ENCODE measurements at regions of chr19 and their contacts with region 1.

Region 1: GRCh38 chr19:45692187-45693105 is at the start of gene QPCTL:
- DNase-seq: peak; percentile 89 to 99 (median 98)
- ATAC-seq: peak; percentile 88 to 90
- H3K4me3 Mint-ChIP-seq: peak within 1 kb of the TSS; percentile 91 to 100 (median 96)
- H3K27ac Mint-ChIP-seq: peak within 1 kb of the TSS; percentile 89 to 99 (median 96)
- H3K4me1 Mint-ChIP-seq: peaks cover 9 to 34% (median 23%) of the 10 kb centered on the region in 4 donors
- H3K27me3 Mint-ChIP-seq: no peaks in the 10 kb centered on the region
- polyA plus RNA-seq, gene QPCTL: 0.65 to 2.3 (median 1.6) TPM

Region 2: DNA sequence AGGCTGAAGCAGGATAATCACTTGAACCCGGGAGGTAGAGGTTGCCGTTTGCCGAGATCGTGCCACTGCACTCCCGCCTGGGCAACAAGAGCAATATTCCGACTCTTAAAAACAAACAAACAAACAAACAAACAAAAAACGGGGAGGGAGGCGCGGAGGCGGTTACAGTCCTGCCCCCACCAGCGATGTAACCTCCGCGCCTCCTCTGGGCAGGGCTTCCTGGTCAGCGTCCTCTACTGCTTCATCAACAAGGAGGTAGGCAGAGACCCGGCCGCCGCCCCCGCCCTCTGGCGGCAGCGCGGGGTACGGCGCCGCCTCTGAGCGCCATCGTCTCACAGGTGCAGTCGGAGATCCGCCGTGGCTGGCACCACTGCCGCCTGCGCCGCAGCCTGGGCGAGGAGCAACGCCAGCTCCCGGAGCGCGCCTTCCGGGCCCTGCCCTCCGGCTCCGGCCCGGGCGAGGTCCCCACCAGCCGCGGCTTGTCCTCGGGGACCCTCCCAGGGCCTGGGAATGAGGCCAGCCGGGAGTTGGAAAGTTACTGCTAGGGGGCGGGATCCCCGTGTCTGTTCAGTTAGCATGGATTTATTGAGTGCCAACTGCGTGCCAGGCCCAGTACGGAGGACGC is 10.9 kb before region 1 on chr19:
- POLR2A ChIA-PET with region 1: interaction called, 19 read pairs
- DNase-seq: peak; percentile 73 to 89 (median 86)
- ATAC-seq: peak; percentile 75 to 82
- H3K4me3 Mint-ChIP-seq: peak overlapping the region; percentile 70 to 88 (median 78)
- H3K27ac Mint-ChIP-seq: peak overlapping the region in 8 of 10 donors; percentile 48 to 87 (median 78)
- H3K4me1 Mint-ChIP-seq: peaks cover 15 to 26% (median 24%) of the 10 kb centered on the region in 4 donors
- H3K27me3 Mint-ChIP-seq: peaks cover 0 to 5% (median 0%) of the 10 kb centered on the region in 5 donors

Region 3: GRCh38 chr19:45717166-45717982 is 24.9 kb after region 1 on chr19:
- POLR2A ChIA-PET with region 1: interaction called, 47 read pairs
- DNase-seq: peak; percentile 93 to 99 (median 98)
- ATAC-seq: peak; percentile 96
- H3K4me3 Mint-ChIP-seq: peak overlapping the region; percentile 87 to 99 (median 97)
- H3K27ac Mint-ChIP-seq: peak overlapping the region; percentile 94 to 99 (median 96)
- H3K4me1 Mint-ChIP-seq: peaks cover 22 to 56% (median 49%) of the 10 kb centered on the region in 4 donors
- H3K27me3 Mint-ChIP-seq: no peaks in the 10 kb centered on the region

Region 4: DNA sequence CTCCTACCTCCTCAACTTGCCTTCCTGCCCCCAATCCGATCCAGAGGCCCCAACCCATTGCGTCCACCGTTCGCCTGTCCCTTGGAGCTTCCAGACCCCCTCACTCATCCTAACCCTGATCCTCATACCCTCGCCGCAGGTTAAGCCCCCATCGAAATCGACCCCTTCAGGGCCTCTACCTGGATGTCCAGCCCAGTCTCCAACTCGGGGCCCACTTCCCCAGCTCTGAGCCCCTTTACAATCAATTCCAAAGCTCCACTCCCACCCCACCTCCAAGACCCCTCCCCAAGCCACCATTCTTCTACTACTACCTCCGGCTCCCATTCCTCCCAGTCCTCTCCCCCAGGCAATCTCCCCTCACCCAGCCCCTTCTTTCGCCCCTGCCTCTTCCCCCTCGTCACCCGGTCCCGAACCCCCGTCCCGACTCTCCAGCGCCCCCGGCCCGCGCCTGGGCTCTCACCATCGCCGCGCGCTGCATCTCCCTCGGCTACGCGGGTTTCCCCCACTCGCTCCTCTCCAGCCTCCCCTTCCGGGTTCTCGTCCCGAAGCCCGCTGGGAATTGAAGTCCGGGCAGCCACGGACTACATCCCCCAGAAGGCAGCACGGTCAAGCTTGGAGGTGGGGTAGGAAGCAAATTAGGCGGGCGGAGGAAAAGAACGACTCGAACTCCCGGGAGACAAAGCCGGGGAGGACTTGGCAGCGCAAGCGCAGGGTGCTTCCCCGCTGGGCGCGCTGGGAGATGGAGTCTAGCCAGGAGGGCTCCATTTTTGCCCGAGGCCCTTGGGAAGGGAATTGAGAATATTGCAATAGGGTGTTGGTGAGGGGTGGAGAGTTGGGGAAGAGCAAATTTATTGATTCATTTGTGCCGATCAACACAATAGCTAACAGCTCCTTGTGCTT is 38.2 kb after region 1 on chr19 and contains the start of gene FBXO46:
- POLR2A ChIA-PET with region 1: interaction called, 16 read pairs
- DNase-seq: peak; percentile 74 to 95 (median 90)
- ATAC-seq: peak; percentile 99 to 100
- H3K4me3 Mint-ChIP-seq: peak within 1 kb of the TSS; percentile 90 to 99 (median 94)
- H3K27ac Mint-ChIP-seq: peak within 1 kb of the TSS; percentile 84 to 96 (median 94)
- H3K4me1 Mint-ChIP-seq: peaks cover 20 to 46% (median 37%) of the 10 kb centered on the region in 4 donors
- H3K27me3 Mint-ChIP-seq: no peaks in the 10 kb centered on the region
- polyA plus RNA-seq, gene FBXO46: 12.4 to 15.2 (median 12.5) TPM

Region 5: GRCh38 chr19:45761714-45762113 is 69.3 kb after region 1 on chr19:
- POLR2A ChIA-PET with region 1: no interaction called
- DNase-seq: no peak
- ATAC-seq: no peak
- H3K4me3 Mint-ChIP-seq: no peak overlapping the region
- H3K27ac Mint-ChIP-seq: no peak overlapping the region
- H3K4me1 Mint-ChIP-seq: no peaks in the 10 kb centered on the region
- H3K27me3 Mint-ChIP-seq: peaks cover 0 to 22% (median 9%) of the 10 kb centered on the region in 5 donors